ENCODE measurements at regions of chr3 and their contacts with region 1.

Region 1: GRCh38 chr3:131549340-131549739 is 46.6 kb upstream of the MRPL3 start:
- DNase-seq: peak; percentile 19
- H3K4me3 Mint-ChIP-seq: no peak overlapping the region
- H3K27ac Mint-ChIP-seq: no peak overlapping the region
- H3K4me1 Mint-ChIP-seq: no peaks in the 10 kb centered on the region
- H3K27me3 Mint-ChIP-seq: peaks cover 14% of the 10 kb centered on the region

Region 2: DNA sequence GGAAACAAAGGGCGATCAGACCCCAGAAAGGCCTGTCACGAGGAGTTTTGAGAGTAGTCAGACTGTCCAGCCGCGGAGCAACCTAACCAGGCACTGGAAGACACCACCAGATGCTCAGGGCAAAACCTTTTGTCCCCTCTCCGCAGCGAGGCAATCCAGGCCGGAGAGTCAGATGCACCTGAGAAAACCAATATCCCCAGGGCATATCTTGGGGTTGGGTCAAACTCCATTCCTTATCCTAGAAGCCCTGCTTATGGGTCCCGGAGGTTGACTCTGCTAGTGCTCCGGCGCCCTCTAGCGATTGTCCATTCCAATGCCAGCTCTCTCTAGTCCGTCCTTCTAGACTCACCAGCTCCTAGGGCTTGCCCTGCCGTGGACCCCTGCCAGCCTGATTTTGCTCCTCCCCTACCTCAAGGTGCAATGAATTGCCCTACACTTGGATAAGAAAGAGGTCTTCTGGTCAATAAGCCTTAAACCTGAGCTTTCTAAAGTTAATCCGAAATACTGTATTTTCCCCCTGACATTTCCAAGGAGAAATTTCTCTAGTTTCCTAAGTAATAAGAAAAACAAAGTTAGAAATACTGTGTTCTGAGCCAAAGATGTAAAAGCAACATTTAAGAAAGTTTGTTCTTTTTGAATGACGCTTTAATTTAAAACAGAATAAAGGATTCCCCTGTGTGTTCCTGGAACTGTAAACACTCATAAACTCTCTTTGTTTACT is 480.0 kb after region 1 on chr3:
- CTCF ChIA-PET with region 1: interaction called, 4 read pairs
- POLR2A ChIA-PET with region 1: no interaction called
- intact Hi-C with region 1: loop called (anchors 2 kb)
- DNase-seq: peak; percentile 77
- H3K4me3 Mint-ChIP-seq: no peak overlapping the region
- H3K27ac Mint-ChIP-seq: no peak overlapping the region
- H3K4me1 Mint-ChIP-seq: peaks cover 5% of the 10 kb centered on the region
- H3K27me3 Mint-ChIP-seq: peaks cover 46% of the 10 kb centered on the region

Measured in activated CD4-positive, alpha-beta memory T cell treated with anti-CD3 and anti-CD28 coated beads for 36 hours (primary cell).